ENCODE measurements at regions of chr9 and their contacts with region 1.

Region 1: DNA sequence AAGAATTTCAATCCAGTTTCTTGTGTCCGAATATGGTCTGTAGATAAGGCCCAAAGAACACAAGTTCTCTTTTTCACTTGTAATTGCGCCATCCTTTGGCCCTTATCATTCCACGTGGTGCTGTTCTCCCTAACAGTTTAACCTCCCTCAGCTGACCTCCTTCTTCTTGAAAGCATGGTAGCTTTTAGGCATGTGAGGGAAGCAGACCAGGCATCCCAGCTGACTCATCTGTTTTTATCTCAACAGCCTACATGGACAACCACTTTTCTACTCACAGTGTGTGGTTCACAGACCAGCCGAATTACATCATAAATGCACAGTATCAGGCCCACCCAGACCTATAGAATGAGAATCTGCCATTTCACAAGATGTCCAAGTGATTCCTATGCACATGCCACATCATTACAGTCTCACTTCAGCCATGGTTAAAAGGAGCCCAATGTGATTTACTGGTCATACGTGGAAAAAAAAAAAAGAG is 26.9 kb upstream of the PLIN2 start:
- DNase-seq: peak; percentile 68 to 95 (median 76)
- ATAC-seq: peak; percentile 97
- H3K4me3 ChIP-seq: no peak overlapping the region
- H3K27ac ChIP-seq: peak overlapping the region; percentile 63
- H3K4me1 ChIP-seq: peaks cover 3 to 20% of the 10 kb centered on the region in 2 experiments; a peak in 3 of 5 replicates
- H3K27me3 ChIP-seq: no peaks in the 10 kb centered on the region
- CTCF ChIP-seq: no peak
- EP300 ChIP-seq: peak; percentile 94
- POLR2A ChIP-seq: no peak
- RAD21 ChIP-seq: peak; percentile 16 to 39; a peak in 2 of 4 replicates

Region 2: GRCh38 chr9:19127881-19128500 is 26.2 kb before region 1 on chr9:
- CTCF ChIA-PET with region 1: no interaction called
- POLR2A ChIA-PET with region 1: interaction called, 4 read pairs
- in situ Hi-C with region 1: no loop called
- intact Hi-C with region 1: loop called (anchors 1 kb)
- DNase-seq: no peak
- ATAC-seq: no peak
- H3K4me3 ChIP-seq: peak overlapping the region; percentile 80
- H3K27ac ChIP-seq: peak overlapping the region; percentile 90; the same call in 2 of the 3 replicates
- H3K4me1 ChIP-seq: peaks cover 20 to 26% of the 10 kb centered on the region in 2 experiments; a peak in 4 of 5 replicates
- H3K27me3 ChIP-seq: no peaks in the 10 kb centered on the region
- CTCF ChIP-seq: no peak
- EP300 ChIP-seq: no peak
- POLR2A ChIP-seq: no peak
- RAD21 ChIP-seq: no peak

Region 3: DNA sequence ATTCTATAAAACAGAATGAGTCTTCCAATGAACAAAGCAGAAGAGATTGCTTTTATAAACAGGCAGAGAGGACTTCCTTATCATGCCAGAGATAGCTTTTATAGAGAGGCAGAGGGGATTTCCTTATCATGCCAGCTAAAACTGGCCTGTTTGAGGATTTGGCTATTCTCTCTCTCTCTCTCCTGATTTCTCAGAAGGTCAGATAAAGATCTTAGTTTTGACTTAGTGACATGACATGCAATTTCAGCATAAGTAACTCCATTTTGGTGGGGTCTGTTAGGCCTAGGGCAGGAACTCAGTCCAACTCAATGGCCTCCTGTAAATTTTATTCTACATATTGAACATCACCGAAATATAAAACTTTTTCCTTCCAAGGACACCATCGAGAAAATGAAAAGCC is 44.8 kb after region 1 on chr9:
- CTCF ChIA-PET with region 1: no interaction called
- POLR2A ChIA-PET with region 1: no interaction called
- in situ Hi-C with region 1: no loop called
- intact Hi-C with region 1: no loop called
- DNase-seq: no peak
- ATAC-seq: no peak
- H3K4me3 ChIP-seq: no peak overlapping the region
- H3K27ac ChIP-seq: no peak overlapping the region
- H3K4me1 ChIP-seq: peaks cover 4 to 17% of the 10 kb centered on the region in 2 experiments; a peak in 3 of 5 replicates
- H3K27me3 ChIP-seq: no peaks in the 10 kb centered on the region
- CTCF ChIP-seq: no peak
- EP300 ChIP-seq: no peak
- POLR2A ChIP-seq: no peak
- RAD21 ChIP-seq: no peak; a peak in 1 of 4 replicates